Ascending aorta (tissue), 2 donors: ENCODE measurements at regions of chr13 and their contacts with region 1.

Region 1: DNA sequence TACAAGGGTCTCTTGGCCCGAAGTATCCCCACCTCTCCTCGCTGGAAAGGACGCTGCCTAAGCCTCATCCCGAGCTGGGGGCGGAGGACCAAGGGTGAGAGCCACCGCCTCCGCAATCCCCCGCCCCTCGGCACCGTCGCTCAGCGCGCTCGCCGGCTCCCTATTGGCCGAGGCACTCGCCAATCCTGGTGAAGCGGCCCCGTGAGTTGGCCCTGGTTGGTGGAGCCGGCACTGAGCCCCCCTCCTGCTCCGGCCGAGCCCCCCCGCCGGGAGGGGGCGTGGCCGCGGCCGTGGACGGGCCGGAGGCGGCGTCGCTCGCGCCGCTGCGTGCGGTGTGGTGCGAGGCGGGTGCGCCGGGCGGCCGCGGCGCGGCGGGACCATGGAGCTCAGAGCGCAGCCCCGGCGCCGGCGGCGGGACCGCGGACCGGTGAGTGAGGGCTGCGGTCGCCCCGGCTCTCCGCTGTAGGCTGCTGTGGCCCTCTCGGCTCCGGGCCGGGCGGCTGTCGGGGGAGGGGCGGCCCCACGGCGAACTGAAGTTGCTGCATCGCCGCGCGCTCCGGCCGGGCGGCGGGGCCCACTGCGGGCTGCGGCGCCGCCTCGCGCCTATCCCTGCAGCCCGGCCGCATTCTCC is at the start of gene WASF3:
- DNase-seq: peak; percentile 36 to 94
- H3K4me3 ChIP-seq: peak within 1 kb of the TSS; percentile 70 to 89
- H3K27ac ChIP-seq: peak within 1 kb of the TSS in 1 of 2 donors; percentile 59
- H3K4me1 ChIP-seq: peaks cover 6 to 7% of the 10 kb centered on the region in 2 donors
- H3K27me3 ChIP-seq: no peaks in the 10 kb centered on the region
- CTCF ChIP-seq: peak in 1 of 3 experiments; percentile 6
- total RNA-seq, gene WASF3: 14.3 TPM

Region 2: GRCh38 chr13:26022538-26023292 is 534.8 kb before region 1 on chr13:
- intact Hi-C with region 1: no loop called
- DNase-seq: peak in 1 of 2 donors; percentile 77
- H3K4me3 ChIP-seq: no peak overlapping the region
- H3K27ac ChIP-seq: no peak overlapping the region
- H3K4me1 ChIP-seq: peaks cover 0 to 8% of the 10 kb centered on the region in 2 donors
- H3K27me3 ChIP-seq: no peaks in the 10 kb centered on the region
- CTCF ChIP-seq: no peak

Region 3: DNA sequence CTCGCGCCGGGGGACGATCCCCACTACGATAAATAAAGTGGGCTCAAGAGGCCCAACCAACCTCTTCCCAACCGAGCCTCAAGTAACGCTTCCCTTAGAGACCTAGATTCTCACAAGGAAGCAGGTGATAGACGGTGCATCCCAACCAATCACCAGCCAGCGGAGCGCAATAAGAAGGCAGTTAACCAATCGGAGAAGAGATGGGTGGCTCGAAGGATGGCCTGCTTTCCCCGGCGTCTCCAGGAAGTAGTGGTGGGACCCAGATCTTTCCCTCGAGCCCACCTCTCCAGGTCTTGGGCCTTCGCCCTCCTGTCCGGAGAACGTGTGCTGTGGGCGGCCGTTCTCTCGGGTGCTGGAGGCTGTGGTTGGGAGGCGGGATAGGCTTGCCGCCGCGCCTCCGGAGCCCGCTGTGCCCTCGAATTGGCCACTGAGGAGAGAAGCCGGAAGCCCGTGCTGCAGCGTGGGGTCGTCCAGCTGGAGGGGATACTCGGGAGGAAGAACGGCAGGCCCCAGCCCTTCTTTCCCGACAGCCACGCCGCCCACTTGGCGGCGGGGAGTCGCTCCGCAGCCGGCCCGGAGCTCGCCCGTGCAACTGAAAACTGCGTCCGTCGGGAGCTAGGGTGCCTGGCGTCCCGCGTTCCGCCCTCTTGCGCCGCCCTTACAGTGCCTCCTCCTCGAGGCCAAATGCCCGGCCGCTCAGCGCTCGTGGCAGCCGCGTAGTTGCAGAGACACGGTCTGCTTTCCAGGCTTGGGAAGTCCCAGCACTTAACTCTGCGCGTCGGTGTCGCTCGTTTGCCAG is 335.6 kb before region 1 on chr13 and contains the start of gene RNF6:
- intact Hi-C with region 1: loop called (anchors 1 kb)
- DNase-seq: peak; percentile 91 to 98
- H3K4me3 ChIP-seq: peak within 1 kb of the TSS; percentile 75 to 76
- H3K27ac ChIP-seq: peak within 1 kb of the TSS; percentile 91 to 97
- H3K4me1 ChIP-seq: peaks cover 0 to 12% of the 10 kb centered on the region in 2 donors
- H3K27me3 ChIP-seq: no peaks in the 10 kb centered on the region
- CTCF ChIP-seq: no peak
- total RNA-seq, gene RNF6: 15.8 TPM

Region 4: GRCh38 chr13:26425443-26426358 is 131.8 kb before region 1 on chr13:
- intact Hi-C with region 1: loop called (anchors 5 kb)
- DNase-seq: no peak
- H3K4me3 ChIP-seq: no peak overlapping the region
- H3K27ac ChIP-seq: peak overlapping the region; percentile 47 to 86
- H3K4me1 ChIP-seq: peaks cover 0 to 11% of the 10 kb centered on the region in 2 donors
- H3K27me3 ChIP-seq: no peaks in the 10 kb centered on the region
- CTCF ChIP-seq: no peak